Activated CD4-positive, alpha-beta memory T cell treated with anti-CD3 and anti-CD28 coated beads, Interleukin-2, amount 10 ng/mL, durations not matched to agents 7 days and 5 days (primary cell): ENCODE measurements at regions of chr4 and their contacts with region 1.

Region 1: DNA sequence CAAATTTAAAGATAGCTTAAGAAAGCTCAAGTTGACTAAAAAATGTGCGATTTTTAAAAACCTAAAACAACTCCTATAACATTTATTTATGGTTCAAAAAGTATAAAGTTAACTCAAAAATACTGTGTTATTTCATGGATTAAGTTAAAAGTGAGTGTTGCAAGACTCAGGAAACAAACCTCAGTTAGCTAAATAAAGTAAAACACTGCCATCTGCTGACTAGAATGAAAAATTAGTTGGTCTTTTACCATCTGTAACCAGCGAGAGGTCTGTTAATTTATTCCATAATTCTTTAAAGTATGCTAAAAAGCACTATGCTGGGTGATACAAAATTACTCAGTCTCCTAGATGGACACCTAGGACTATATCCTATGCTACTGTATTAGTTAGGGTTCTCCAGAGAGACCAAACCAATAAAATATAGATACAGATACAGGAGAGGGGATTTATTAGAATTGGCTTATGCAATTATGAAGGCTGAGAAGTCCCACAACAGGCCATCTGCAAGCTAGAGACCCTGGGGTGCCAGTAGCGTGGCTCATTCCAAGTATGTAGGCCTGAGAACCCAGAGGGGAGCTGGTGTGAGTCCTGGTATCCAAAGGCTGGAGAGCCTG is 4.9 kb upstream of the WDFY3 start:
- DNase-seq: no peak
- H3K4me3 Mint-ChIP-seq: no peak overlapping the region
- H3K27ac Mint-ChIP-seq: no peak overlapping the region
- H3K4me1 Mint-ChIP-seq: peaks cover 9% of the 10 kb centered on the region
- H3K27me3 Mint-ChIP-seq: peaks cover 30% of the 10 kb centered on the region

Region 2: DNA sequence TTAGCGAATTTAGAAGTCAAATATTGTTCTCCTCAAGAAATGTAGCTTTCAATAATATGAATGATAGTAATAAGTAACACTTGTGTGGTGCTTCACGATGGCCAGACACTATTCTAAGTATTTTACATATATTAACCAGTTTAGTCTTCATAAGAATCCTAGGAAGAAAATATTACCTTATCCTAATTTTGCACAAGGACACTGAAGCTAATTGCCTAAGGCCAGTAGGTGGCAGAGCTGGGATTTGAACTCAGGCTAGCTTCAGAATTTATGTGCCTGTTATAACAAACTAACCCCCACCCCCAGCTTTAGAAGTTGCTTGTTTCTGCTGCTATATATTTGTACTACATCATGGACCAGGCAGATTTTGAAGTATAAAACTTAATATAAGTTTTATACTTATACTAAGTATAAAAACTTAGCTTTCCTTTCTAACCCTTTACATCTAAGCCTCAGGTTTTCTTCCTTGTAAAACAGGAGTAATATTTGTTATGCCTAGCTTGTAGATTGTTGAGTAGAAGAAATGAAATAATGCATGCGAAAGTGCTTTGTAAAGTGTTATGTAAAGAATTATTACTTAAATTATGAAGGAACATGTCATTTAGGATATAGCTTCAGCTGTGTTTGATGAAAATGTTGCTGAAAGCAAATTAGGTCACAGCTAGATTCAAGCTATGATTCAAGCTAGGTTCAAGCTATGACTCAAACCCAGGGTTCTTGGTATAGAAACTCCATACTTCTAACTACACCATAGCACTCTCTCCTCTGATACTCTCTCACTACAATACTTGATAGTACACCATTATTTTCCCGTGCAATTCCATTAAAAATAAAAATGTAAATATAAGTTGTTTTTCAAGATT is 392.7 kb before region 1 on chr4:
- CTCF ChIA-PET with region 1: interaction called, 15 read pairs
- POLR2A ChIA-PET with region 1: no interaction called
- DNase-seq: no peak
- H3K4me3 Mint-ChIP-seq: no peak overlapping the region
- H3K27ac Mint-ChIP-seq: no peak overlapping the region
- H3K4me1 Mint-ChIP-seq: peaks cover 23% of the 10 kb centered on the region
- H3K27me3 Mint-ChIP-seq: peaks cover 20% of the 10 kb centered on the region

Region 3: GRCh38 chr4:84750253-84750959 is 221.0 kb before region 1 on chr4:
- CTCF ChIA-PET with region 1: interaction called, 24 read pairs
- POLR2A ChIA-PET with region 1: no interaction called
- DNase-seq: no peak
- H3K4me3 Mint-ChIP-seq: no peak overlapping the region
- H3K27ac Mint-ChIP-seq: no peak overlapping the region
- H3K4me1 Mint-ChIP-seq: no peaks in the 10 kb centered on the region
- H3K27me3 Mint-ChIP-seq: peaks cover 2% of the 10 kb centered on the region

Region 4: DNA sequence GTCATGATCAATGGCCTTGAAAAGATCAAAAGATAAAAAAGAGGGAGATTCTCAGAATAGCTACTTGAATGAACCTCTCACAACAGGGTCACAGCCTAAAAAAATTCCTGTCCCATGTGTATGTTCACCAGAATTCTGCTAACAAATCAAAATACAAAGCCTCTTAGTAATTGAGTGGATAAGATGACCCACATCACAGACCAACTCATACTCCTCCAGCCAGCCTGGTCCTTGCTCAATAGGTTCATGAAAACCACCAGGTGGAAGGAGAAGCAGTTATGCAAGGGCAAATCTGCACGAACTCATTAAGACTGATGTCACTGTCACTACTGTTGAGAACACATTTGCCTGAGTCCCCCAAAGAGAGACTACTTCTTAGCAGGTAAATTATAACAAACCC is 26.5 kb before region 1 on chr4:
- CTCF ChIA-PET with region 1: no interaction called
- POLR2A ChIA-PET with region 1: no interaction called
- DNase-seq: no peak
- H3K4me3 Mint-ChIP-seq: no peak overlapping the region
- H3K27ac Mint-ChIP-seq: no peak overlapping the region
- H3K4me1 Mint-ChIP-seq: no peaks in the 10 kb centered on the region
- H3K27me3 Mint-ChIP-seq: no peaks in the 10 kb centered on the region

Region 5: DNA sequence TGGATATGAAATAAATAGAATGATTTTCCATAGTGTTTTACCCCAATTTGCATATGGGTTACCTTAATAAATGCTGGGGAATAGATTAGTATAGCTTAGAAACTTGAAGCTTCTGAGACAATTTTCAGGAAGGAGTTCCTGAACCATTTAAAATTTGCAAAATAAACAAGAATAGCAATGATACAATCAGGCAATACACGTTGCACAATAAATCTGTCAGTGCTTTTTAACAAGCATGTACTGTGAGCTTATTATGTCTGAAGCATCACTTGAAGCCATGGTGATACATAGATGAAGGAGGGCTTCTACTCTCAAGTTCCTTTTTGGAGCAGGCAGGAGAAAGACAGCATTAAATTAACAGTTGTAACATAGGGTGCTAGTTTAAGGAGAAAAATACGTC is 79.3 kb after region 1 on chr4:
- CTCF ChIA-PET with region 1: no interaction called
- POLR2A ChIA-PET with region 1: no interaction called
- DNase-seq: no peak
- H3K4me3 Mint-ChIP-seq: no peak overlapping the region
- H3K27ac Mint-ChIP-seq: no peak overlapping the region
- H3K4me1 Mint-ChIP-seq: no peaks in the 10 kb centered on the region
- H3K27me3 Mint-ChIP-seq: no peaks in the 10 kb centered on the region